ENCODE measurements at regions of chr2 and their contacts with region 1.

Region 1: DNA sequence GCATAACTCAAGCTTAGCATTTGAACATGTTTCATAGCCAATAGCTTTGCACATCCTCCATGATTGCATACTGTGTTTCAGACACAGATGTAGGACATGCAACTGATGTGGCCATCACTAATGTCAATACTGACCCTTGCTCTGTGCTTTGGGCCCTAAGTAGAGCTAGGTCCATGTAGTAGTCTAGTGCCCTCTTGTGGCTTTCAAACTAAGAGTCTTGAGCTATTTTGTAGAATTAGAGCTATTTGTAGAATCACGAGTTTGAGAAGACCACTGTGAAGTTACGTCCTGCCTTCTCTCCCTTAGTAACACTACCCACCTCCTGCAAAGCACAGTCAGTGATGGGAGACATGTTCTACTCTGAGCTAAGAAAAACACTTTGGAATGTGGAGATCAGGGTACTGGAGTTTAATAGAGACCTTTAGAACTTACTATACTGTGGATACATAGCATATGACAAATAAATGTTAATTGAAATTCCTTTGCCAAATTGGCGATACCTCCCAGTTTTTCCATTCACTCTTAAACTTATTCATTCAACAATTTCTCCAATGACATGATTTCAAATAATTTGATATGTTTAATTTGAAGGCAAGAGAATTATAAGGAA is 306.5 kb upstream of the TNP1 start:
- DNase-seq: no peak
- ATAC-seq: peak; percentile 75
- H3K4me3 Mint-ChIP-seq: no peak overlapping the region
- H3K27ac Mint-ChIP-seq: no peak overlapping the region
- H3K4me1 Mint-ChIP-seq: no peaks in the 10 kb centered on the region
- H3K27me3 Mint-ChIP-seq: no peaks in the 10 kb centered on the region; the same call in 1 of the 2 replicates
- CTCF ChIP-seq: no peak

Region 2: DNA sequence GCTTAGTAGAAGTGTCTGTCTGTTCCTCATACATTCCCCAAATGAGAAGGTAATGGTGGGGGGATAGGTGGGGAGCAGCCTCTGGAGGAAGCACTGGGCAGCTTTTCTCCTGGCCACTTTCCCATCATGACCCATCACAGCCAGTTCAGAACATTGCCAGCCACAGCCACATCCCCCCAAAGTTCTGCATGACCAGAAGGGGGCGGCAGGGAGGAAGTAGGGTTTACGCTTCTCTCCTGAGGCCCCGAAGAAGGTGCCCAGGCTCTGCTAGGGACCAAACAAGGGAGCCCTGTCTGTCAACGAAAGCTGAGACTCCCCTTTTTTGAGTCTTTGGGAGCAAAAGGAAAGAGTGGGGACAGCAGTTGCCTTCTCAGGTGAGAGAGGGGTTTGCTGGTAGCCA is 478.7 kb before region 1 on chr2:
- CTCF ChIA-PET with region 1: interaction called, 14 read pairs
- POLR2A ChIA-PET with region 1: no interaction called
- DNase-seq: peak; percentile 84
- ATAC-seq: peak; percentile 67
- H3K4me3 Mint-ChIP-seq: no peak overlapping the region
- H3K27ac Mint-ChIP-seq: no peak overlapping the region
- H3K4me1 Mint-ChIP-seq: peaks cover 34% of the 10 kb centered on the region
- H3K27me3 Mint-ChIP-seq: peaks cover 24% of the 10 kb centered on the region
- CTCF ChIP-seq: peak; percentile 67

Region 3: GRCh38 chr2:216692636-216693413 is 473.5 kb before region 1 on chr2:
- CTCF ChIA-PET with region 1: interaction called, 18 read pairs
- POLR2A ChIA-PET with region 1: no interaction called
- DNase-seq: peak; percentile 84
- ATAC-seq: peak; percentile 6; the same call in 1 of the 2 replicates
- H3K4me3 Mint-ChIP-seq: peak overlapping the region; percentile 79
- H3K27ac Mint-ChIP-seq: peak overlapping the region; percentile 34
- H3K4me1 Mint-ChIP-seq: peaks cover 53% of the 10 kb centered on the region
- H3K27me3 Mint-ChIP-seq: peaks cover 51% of the 10 kb centered on the region
- CTCF ChIP-seq: no peak

Region 4: DNA sequence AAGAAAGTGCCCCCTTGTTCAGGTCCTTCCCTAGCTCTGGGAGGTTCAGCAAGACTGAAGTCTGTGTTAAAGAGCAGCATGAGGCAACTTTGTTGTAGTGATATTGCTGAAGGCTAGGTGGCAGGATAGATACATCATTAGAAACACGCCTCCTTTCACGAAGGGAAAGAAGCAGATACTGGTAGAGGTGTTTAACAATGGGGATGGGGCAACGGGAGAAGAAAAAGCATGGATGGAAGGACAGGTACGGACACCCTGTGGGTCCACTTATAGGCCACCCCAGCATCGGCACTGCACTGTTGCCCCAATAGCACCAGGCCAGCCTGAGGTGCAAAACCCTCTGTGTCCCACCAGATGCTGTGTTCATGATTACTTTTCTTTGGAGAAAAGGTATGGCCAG is 467.5 kb before region 1 on chr2:
- CTCF ChIA-PET with region 1: interaction called, 18 read pairs
- POLR2A ChIA-PET with region 1: no interaction called
- DNase-seq: no peak
- ATAC-seq: peak; percentile 43
- H3K4me3 Mint-ChIP-seq: no peak overlapping the region
- H3K27ac Mint-ChIP-seq: no peak overlapping the region
- H3K4me1 Mint-ChIP-seq: peaks cover 21% of the 10 kb centered on the region
- H3K27me3 Mint-ChIP-seq: peaks cover 23% of the 10 kb centered on the region
- CTCF ChIP-seq: peak; percentile 40; the same call in 1 of the 2 replicates

Region 5: GRCh38 chr2:216849987-216850386 is 316.4 kb before region 1 on chr2:
- CTCF ChIA-PET with region 1: no interaction called
- POLR2A ChIA-PET with region 1: no interaction called
- DNase-seq: no peak
- ATAC-seq: no peak
- H3K4me3 Mint-ChIP-seq: no peak overlapping the region
- H3K27ac Mint-ChIP-seq: no peak overlapping the region
- H3K4me1 Mint-ChIP-seq: peaks cover 7% of the 10 kb centered on the region
- H3K27me3 Mint-ChIP-seq: no peaks in the 10 kb centered on the region
- CTCF ChIP-seq: no peak

Region 6: DNA sequence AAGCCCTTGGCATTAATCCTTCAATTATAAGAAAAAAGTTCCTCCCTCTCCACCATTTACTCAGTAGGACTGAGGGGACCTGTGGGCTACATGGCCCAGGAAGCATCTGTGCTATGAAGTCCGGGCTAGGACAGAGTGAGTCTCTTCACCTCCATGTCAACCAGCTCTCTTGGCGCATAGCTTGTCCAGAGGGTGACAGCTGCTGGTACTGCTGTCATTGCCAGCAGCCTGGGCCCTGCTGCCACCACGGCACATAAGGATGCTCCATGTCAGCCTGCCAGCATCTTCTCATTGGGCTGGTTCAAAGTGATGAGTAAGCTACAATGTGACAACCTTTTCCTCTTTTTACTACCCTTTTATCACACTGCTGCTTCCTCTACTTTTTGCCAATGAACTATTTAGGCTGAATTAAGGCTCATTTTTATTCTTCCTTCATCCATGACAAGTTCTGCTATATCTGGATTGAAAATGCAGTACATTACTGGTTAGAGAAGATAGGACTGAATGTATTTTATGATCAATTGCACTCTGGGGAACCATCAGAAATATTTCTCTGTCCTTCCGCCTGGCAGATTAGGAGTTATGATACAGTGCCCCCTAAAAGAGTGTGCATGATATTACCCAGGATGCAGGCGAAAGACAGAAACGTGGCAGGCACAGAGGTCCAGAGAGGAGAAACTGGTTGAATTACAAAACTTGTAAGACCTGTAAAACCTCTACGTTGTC is 47.6 kb before region 1 on chr2:
- CTCF ChIA-PET with region 1: no interaction called
- POLR2A ChIA-PET with region 1: no interaction called
- DNase-seq: no peak
- ATAC-seq: no peak
- H3K4me3 Mint-ChIP-seq: no peak overlapping the region
- H3K27ac Mint-ChIP-seq: no peak overlapping the region
- H3K4me1 Mint-ChIP-seq: no peaks in the 10 kb centered on the region
- H3K27me3 Mint-ChIP-seq: no peaks in the 10 kb centered on the region; the same call in 1 of the 2 replicates
- CTCF ChIP-seq: no peak

Region 7: GRCh38 chr2:217147827-217148226 is 18.5 kb before region 1 on chr2:
- CTCF ChIA-PET with region 1: interaction called, 13 read pairs
- POLR2A ChIA-PET with region 1: no interaction called
- DNase-seq: no peak
- ATAC-seq: no peak
- H3K4me3 Mint-ChIP-seq: no peak overlapping the region
- H3K27ac Mint-ChIP-seq: no peak overlapping the region
- H3K4me1 Mint-ChIP-seq: no peaks in the 10 kb centered on the region
- H3K27me3 Mint-ChIP-seq: no peaks in the 10 kb centered on the region; the same call in 1 of the 2 replicates
- CTCF ChIP-seq: no peak

Region 8: DNA sequence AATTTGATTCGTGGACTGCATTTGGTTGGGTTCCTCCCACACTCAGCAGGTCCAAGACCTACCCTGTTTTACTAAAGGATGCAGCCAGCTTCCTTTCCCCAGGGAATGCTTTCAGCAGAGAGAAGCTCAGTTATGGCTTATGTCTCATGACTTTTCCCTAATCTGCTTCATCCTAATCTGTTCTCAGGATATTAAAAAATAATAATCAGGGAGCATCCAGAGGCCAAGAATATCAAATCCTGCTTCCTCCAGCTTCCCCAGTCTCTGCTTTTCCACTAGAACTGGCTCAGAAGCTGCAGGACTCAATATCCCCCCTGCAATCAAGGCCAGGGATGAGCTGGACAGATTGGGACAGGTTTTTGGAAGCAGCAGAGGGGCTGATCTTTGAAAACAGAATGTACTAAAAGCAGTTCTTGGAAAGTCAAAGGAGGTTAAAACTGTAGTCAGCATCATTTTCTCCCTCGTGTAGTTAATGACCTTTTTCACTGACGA is 20.4 kb after region 1 on chr2:
- CTCF ChIA-PET with region 1: no interaction called
- POLR2A ChIA-PET with region 1: no interaction called
- DNase-seq: no peak
- ATAC-seq: no peak
- H3K4me3 Mint-ChIP-seq: no peak overlapping the region
- H3K27ac Mint-ChIP-seq: no peak overlapping the region
- H3K4me1 Mint-ChIP-seq: no peaks in the 10 kb centered on the region
- H3K27me3 Mint-ChIP-seq: no peaks in the 10 kb centered on the region; the same call in 1 of the 2 replicates
- CTCF ChIP-seq: no peak

Region 9: GRCh38 chr2:217713395-217714286 is 547.3 kb after region 1 on chr2:
- CTCF ChIA-PET with region 1: interaction called, 11 read pairs
- POLR2A ChIA-PET with region 1: no interaction called
- DNase-seq: peak; percentile 91
- ATAC-seq: peak; percentile 89
- H3K4me3 Mint-ChIP-seq: no peak overlapping the region
- H3K27ac Mint-ChIP-seq: no peak overlapping the region
- H3K4me1 Mint-ChIP-seq: peaks cover 13% of the 10 kb centered on the region
- H3K27me3 Mint-ChIP-seq: peaks cover 3% of the 10 kb centered on the region
- CTCF ChIP-seq: peak; percentile 96

Measured in WTC11 (cell line).